CD4-positive, alpha-beta memory T cell (primary cell): ENCODE measurements at regions of chr11 and their contacts with region 1.

Region 1: DNA sequence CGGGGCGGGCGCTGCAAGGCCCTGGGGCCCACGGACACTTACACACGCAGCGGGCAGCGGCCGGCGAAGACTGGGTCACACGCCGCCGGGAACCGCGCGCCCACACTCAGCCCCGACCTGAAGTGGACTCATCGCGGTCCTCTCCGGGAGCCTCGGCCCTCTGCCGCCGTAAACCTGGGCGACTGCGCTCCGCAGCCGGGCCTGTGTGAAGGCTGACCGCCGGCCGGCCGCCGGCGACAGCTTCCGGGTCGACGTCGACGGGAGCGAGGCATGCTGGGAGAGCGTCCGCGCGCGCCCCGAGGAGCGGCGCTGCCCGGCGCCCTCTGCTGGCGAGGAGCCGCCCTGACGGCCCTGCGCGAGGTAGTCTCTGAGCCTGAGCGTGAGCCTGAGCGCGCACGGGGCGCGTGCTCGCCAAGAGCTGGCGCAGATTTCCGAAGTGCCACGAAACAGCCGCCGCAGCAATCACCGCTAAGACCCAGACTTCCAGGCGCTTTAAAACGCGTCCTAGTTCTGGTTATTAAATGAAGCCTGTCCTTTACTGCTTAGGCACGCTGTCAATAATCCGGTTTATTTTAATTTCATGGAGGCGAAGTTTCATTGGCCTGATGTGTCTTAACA is at the start of gene SNX19:
- DNase-seq: peak; percentile 88 to 91 (median 90)
- H3K4me3 ChIP-seq: peak within 1 kb of the TSS; percentile 66 to 74
- H3K4me3 Mint-ChIP-seq: peak within 1 kb of the TSS; percentile 88 to 92 (median 90)
- H3K27ac ChIP-seq: peak within 1 kb of the TSS; percentile 95
- H3K27ac Mint-ChIP-seq: peak within 1 kb of the TSS; percentile 92 to 95 (median 93)
- H3K4me1 ChIP-seq: peaks cover 41% of the 10 kb centered on the region
- H3K4me1 Mint-ChIP-seq: peaks cover 18 to 57% (median 33%) of the 10 kb centered on the region in 4 donors
- H3K27me3 ChIP-seq: no peaks in the 10 kb centered on the region
- H3K27me3 Mint-ChIP-seq: peaks cover 5% of the 10 kb centered on the region in 2 donors
- total RNA-seq, gene SNX19: 84.1 to 94.2 TPM

Region 2: DNA sequence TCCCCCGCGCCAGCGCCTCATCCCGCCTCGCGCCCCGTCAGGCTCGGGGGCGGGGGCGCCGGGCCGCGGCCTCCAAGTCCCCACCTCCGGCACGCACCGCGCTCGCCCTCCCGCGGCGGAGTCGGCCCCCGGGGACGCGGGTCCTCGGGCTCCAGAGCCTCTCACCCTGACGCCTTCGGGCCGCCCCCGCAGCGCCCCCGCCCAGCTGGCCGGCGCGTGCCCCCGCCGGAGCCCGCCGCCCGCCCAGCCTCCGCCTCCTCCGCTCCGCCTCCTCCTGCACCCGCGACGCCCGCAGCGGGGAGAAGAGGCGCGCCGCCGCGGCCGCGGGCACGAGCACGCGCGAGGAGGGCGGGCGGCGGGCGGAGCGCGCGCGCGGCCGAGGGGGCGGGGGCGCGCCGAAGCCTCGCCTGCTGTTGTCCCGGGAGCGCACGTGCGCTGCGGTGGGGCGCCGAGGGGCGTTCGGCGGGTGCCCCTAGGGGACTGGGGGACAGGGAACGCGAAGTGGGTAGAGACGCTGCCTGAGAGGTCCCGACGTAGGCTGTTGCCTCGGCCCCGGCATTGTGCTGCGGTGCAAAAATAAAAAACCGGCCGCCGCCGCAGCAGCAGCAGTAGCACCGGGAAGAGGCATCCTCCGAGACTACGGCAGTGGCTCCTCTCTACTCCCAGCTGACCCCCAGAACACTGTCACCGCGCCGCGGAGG is 1636.9 kb before region 1 on chr11:
- CTCF ChIA-PET with region 1: no interaction called
- POLR2A ChIA-PET with region 1: no interaction called
- intact Hi-C with region 1: loop called (anchors 2 kb)
- DNase-seq: peak; percentile 70 to 79 (median 74)
- H3K4me3 ChIP-seq: peak overlapping the region in 1 of 2 donors; percentile 31
- H3K4me3 Mint-ChIP-seq: peak overlapping the region; percentile 75 to 86 (median 84)
- H3K27ac ChIP-seq: no peak overlapping the region
- H3K27ac Mint-ChIP-seq: peak overlapping the region in 2 of 7 donors; percentile 54 to 72
- H3K4me1 ChIP-seq: peaks cover 19% of the 10 kb centered on the region
- H3K4me1 Mint-ChIP-seq: peaks cover 12 to 27% (median 18%) of the 10 kb centered on the region in 4 donors
- H3K27me3 ChIP-seq: no peaks in the 10 kb centered on the region
- H3K27me3 Mint-ChIP-seq: peaks cover 23% of the 10 kb centered on the region in 2 donors

Region 3: DNA sequence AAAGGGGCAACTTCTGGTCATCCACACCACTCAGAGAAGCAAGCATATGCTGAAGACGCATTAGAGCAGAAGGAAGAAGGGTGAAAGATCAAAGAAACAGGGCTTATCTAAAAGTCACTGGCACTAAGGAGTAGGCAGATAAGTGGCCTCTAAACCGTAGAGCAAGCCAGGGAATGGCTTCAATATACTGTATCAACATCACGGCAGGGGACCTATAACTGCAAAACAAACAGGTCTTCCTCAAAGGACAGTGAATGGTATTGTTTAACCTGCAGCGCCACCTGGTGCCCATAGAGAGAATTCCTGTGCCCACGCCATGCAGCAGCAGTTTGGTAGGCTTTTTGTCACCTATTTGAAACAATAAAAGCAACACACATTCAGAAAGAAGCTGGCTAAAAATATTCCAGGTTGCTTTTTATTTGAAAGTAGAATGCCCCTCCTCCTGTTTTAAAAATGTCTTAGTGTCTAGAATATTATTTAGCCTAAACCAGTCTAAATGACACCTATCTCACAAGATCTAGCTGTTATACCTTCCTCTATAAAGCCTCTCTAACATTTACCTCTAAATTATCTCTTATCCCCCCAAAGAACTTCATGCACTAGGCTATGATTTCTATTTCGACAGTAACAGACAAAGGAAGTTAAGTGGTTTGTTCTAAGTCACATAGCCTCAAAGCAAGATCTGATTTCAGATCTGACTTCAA is 21.9 kb before region 1 on chr11:
- CTCF ChIA-PET with region 1: interaction called, 54 read pairs
- POLR2A ChIA-PET with region 1: interaction called, 11 read pairs
- intact Hi-C with region 1: no loop called
- DNase-seq: peak; percentile 43 to 60 (median 50)
- H3K4me3 ChIP-seq: no peak overlapping the region
- H3K4me3 Mint-ChIP-seq: no peak overlapping the region
- H3K27ac ChIP-seq: no peak overlapping the region
- H3K27ac Mint-ChIP-seq: peak overlapping the region in 2 of 7 donors; percentile 18 to 45
- H3K4me1 ChIP-seq: no peaks in the 10 kb centered on the region
- H3K4me1 Mint-ChIP-seq: peaks cover 8 to 11% (median 9%) of the 10 kb centered on the region in 4 donors
- H3K27me3 ChIP-seq: no peaks in the 10 kb centered on the region
- H3K27me3 Mint-ChIP-seq: no peaks in the 10 kb centered on the region

Region 4: GRCh38 chr11:130904380-130904779 is 12.0 kb before region 1 on chr11:
- CTCF ChIA-PET with region 1: interaction called, 31 read pairs
- POLR2A ChIA-PET with region 1: interaction called, 16 read pairs
- intact Hi-C with region 1: no loop called
- DNase-seq: no peak
- H3K4me3 ChIP-seq: no peak overlapping the region
- H3K4me3 Mint-ChIP-seq: no peak overlapping the region
- H3K27ac ChIP-seq: no peak overlapping the region
- H3K27ac Mint-ChIP-seq: no peak overlapping the region
- H3K4me1 ChIP-seq: peaks cover 3% of the 10 kb centered on the region
- H3K4me1 Mint-ChIP-seq: peaks cover 13 to 31% (median 19%) of the 10 kb centered on the region in 4 donors
- H3K27me3 ChIP-seq: no peaks in the 10 kb centered on the region
- H3K27me3 Mint-ChIP-seq: no peaks in the 10 kb centered on the region

Region 5: DNA sequence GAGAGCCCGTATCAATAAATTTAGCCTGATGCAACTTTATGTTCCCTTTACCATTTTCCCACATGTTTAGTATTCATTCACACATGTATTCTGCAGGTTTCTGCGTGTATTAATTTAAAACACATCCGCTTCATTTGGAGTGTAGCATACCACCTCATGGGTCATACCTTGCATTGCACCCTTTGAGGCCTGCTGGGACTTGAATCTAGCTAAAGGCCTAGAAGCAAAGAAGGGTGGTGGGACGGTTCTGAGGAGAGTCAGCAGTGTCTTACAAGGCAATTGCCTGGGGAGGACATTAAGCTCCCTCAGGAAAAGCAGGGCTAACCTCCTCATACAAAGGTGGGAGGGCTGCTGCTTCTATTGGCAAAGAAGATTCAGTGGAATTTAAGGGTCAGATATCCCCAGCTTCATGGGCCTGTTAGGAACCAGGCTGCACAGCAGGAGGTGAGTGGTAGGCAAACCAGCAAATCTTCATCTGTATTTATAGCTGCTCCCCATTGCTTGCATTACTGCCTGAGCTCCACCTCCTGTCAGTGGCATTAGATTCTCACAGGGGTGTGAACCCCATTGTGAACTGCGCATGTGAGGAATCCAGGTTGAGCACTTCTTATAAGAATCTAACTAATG is 15.9 kb after region 1 on chr11:
- CTCF ChIA-PET with region 1: interaction called, 10 read pairs
- POLR2A ChIA-PET with region 1: interaction called, 4 read pairs
- intact Hi-C with region 1: no loop called
- DNase-seq: no peak
- H3K4me3 ChIP-seq: no peak overlapping the region
- H3K4me3 Mint-ChIP-seq: no peak overlapping the region
- H3K27ac ChIP-seq: no peak overlapping the region
- H3K27ac Mint-ChIP-seq: no peak overlapping the region
- H3K4me1 ChIP-seq: no peaks in the 10 kb centered on the region
- H3K4me1 Mint-ChIP-seq: no peaks in the 10 kb centered on the region
- H3K27me3 ChIP-seq: no peaks in the 10 kb centered on the region
- H3K27me3 Mint-ChIP-seq: peaks cover 0 to 3% of the 10 kb centered on the region in 2 donors

Region 6: GRCh38 chr11:131217313-131218310 is 301.3 kb after region 1 on chr11:
- CTCF ChIA-PET with region 1: no interaction called
- POLR2A ChIA-PET with region 1: no interaction called
- intact Hi-C with region 1: no loop called
- DNase-seq: no peak
- H3K4me3 ChIP-seq: no peak overlapping the region
- H3K4me3 Mint-ChIP-seq: no peak overlapping the region
- H3K27ac ChIP-seq: no peak overlapping the region
- H3K27ac Mint-ChIP-seq: no peak overlapping the region
- H3K4me1 ChIP-seq: no peaks in the 10 kb centered on the region
- H3K4me1 Mint-ChIP-seq: no peaks in the 10 kb centered on the region
- H3K27me3 ChIP-seq: no peaks in the 10 kb centered on the region
- H3K27me3 Mint-ChIP-seq: peaks cover 0 to 2% of the 10 kb centered on the region in 2 donors